CD8-positive, alpha-beta memory T cell (primary cell): ENCODE measurements at regions of chr3 and their contacts with region 1.

Region 1: GRCh38 chr3:47151836-47152235 is 12.1 kb downstream of the SETD2 start:
- DNase-seq: no peak
- H3K4me3 ChIP-seq: no peak overlapping the region
- H3K4me3 Mint-ChIP-seq: peak overlapping the region in 3 of 7 donors; percentile 33 to 61 (median 37)
- H3K27ac ChIP-seq: no peak overlapping the region
- H3K27ac Mint-ChIP-seq: peak overlapping the region in 1 of 8 donors; percentile 53
- H3K4me1 ChIP-seq: peaks cover 50% of the 10 kb centered on the region
- H3K4me1 Mint-ChIP-seq: peaks cover 71 to 83% (median 80%) of the 10 kb centered on the region in 3 donors
- H3K27me3 ChIP-seq: no peaks in the 10 kb centered on the region
- H3K27me3 Mint-ChIP-seq: no peaks in the 10 kb centered on the region

Region 2: DNA sequence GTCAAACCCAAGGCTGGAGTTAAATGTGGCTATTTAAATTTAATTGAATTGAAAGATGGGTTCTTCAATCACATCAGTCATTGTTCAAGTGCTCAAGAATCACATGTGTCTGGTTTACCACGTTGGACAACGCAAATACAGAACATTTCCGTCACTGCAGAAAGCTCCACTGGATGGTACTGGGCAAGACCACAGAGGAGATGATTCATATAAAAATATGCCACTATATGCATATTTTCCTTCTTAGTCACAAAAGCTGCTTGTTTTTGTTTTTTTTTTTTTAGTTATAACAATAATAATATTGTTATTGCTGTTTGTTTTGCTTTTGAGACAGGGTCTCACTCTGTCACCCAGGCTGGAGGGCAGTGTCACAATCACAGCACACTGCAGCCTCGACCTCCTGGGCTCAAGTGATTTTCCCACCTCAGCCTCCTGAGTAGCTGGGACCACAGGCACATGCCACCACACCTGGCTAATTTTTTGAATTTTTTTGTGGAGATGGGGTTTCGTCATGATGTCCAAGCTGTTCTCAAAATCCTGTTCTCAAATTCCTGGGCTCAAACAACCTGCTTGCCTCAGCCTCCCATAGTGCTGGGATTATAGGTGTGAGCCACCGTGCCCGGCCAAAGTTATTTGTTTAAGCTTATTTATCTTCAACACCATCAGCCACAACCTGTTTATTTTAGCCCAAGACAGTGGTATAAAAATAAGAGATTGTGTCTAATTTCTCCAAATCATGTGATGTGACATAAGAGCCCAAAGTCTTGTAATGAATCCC is 634.6 kb before region 1 on chr3:
- CTCF ChIA-PET with region 1: no interaction called
- POLR2A ChIA-PET with region 1: no interaction called
- DNase-seq: no peak
- H3K4me3 ChIP-seq: no peak overlapping the region
- H3K4me3 Mint-ChIP-seq: no peak overlapping the region
- H3K27ac ChIP-seq: no peak overlapping the region
- H3K27ac Mint-ChIP-seq: no peak overlapping the region
- H3K4me1 ChIP-seq: no peaks in the 10 kb centered on the region
- H3K4me1 Mint-ChIP-seq: peaks cover 4 to 16% (median 4%) of the 10 kb centered on the region in 3 donors
- H3K27me3 ChIP-seq: no peaks in the 10 kb centered on the region
- H3K27me3 Mint-ChIP-seq: peaks cover 0 to 2% of the 10 kb centered on the region in 2 donors

Region 3: GRCh38 chr3:47108546-47108945 is 43.3 kb before region 1 on chr3:
- CTCF ChIA-PET with region 1: no interaction called
- POLR2A ChIA-PET with region 1: interaction called, 11 read pairs
- DNase-seq: no peak
- H3K4me3 ChIP-seq: no peak overlapping the region
- H3K4me3 Mint-ChIP-seq: no peak overlapping the region
- H3K27ac ChIP-seq: no peak overlapping the region
- H3K27ac Mint-ChIP-seq: peak overlapping the region in 3 of 8 donors; percentile 1 to 76 (median 24)
- H3K4me1 ChIP-seq: no peaks in the 10 kb centered on the region
- H3K4me1 Mint-ChIP-seq: peaks cover 7 to 19% (median 9%) of the 10 kb centered on the region in 3 donors
- H3K27me3 ChIP-seq: no peaks in the 10 kb centered on the region
- H3K27me3 Mint-ChIP-seq: no peaks in the 10 kb centered on the region